AG04449 (cell line): ENCODE measurements at regions of chr4 and their contacts with region 1.

Region 1: GRCh38 chr4:168585168-168586091 is 88.6 kb downstream of the PALLD start:
- DNase-seq: no peak
- H3K4me3 ChIP-seq: no peak overlapping the region
- CTCF ChIP-seq: peak; percentile 79

Region 2: DNA sequence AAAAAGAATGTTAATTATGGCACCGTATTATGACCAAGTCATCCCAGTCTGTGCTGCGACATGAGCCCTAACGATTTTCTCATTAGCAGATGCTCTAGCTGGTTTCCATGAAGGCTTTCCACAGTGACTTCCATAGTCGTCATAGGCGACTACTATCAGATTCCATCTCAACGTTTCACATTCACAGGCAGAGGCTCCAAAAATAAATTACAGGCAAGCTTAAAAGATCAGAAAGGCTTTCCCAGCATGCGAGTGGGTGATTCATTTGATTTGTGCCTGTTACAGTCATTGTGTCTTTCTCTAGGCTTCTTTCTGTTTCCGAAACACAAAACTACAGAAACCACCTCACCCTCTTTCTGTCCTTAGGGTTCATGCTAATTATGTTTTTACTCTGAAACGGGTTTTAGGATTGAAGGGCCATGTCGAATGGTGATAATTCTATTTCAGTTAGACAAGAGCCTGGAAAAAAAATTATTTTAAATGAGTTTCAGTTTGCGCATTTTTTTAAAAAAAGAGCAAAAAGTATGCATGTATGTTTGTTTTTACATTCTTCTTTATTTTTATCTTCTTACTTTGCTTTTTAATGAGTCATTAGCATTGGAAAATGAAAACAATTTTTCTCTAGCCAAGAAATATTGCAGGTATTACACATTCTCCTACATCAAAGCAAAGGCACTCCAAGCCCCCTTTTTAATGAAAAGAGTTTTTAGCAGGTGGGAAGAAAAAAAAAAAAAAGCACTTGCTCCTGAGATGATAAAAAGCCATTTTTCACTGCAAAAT is 45.2 kb before region 1 on chr4:
- CTCF ChIA-PET with region 1: interaction called, 10 read pairs
- POLR2A ChIA-PET with region 1: no interaction called
- DNase-seq: peak; percentile 82
- H3K4me3 ChIP-seq: peak overlapping the region; percentile 30
- CTCF ChIP-seq: no peak

Region 3: DNA sequence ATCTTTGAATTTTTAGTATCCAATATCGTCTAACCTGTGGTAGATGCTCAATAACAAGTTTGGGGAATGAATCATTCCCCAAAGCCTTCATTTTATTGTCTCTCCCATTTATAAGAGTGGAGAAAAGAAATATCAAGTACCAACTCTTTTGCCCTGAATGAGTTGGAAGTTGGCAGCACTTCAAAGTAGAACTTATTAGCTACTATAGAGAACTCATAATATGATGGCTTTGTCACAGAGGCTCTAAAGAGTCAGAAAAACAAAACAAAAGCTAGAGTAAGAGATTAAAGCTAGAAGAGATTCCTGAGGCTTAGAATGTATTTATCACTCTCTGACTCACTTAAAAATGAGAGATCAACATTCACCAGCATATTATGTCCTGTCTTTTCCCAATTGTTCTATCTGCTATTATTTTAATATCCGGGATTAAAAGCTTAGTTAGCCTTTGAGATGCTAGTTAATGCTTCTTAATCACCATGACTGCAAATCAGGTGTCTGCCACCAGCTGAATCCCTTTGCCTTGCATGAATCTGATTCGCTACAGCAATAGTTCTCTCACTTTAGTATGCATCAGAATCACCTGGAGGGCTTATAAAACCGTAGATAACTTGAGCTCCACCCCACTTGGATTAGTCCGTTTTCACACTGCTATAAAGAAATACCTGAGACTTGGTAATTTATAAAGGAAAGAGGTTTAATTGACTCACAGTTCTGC is 10.7 kb before region 1 on chr4:
- CTCF ChIA-PET with region 1: interaction called, 39 read pairs
- POLR2A ChIA-PET with region 1: no interaction called
- DNase-seq: no peak
- H3K4me3 ChIP-seq: no peak overlapping the region
- CTCF ChIP-seq: no peak

Region 4: DNA sequence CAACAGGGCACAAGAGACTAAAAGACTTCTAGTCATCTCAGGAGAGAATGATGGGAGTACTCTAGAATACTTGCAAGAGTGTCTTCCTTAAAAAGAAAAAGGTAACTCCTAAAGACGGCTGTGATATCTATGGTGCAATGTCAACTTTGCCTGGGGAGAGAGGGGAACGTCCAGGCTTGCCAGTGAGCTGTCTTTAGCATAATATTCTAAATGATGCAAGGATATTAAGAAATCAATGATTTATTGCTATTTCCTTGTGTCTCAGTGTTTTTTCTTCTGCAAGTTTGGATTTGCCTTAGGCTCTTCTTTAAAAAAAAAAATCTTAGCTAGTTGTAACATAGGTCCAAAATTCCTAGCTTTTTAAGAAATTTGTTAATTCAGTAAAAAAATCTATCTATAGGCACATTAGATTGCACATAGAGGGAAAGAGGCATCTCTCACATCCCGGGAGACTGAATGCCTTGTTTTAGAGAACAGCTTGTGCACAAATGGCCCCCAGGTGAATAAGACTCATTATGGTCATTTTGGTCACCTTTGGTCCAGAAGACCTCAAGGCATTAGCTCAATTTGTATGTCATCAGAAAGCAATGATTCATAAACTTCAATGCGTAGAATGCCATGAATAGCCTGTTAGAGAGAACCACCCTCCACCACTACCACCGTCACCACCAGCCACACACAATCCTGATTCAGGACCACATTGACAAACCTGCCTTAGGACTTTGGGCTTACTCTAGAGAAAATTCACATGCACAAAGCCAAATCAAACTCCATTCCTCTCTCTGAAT is 15.6 kb after region 1 on chr4:
- CTCF ChIA-PET with region 1: interaction called, 11 read pairs
- POLR2A ChIA-PET with region 1: interaction called, 3 read pairs
- DNase-seq: no peak
- H3K4me3 ChIP-seq: no peak overlapping the region
- CTCF ChIP-seq: no peak